CD4-positive, alpha-beta T cell (primary cell): ENCODE measurements at regions of chr14 and their contacts with region 1.

Region 1: DNA sequence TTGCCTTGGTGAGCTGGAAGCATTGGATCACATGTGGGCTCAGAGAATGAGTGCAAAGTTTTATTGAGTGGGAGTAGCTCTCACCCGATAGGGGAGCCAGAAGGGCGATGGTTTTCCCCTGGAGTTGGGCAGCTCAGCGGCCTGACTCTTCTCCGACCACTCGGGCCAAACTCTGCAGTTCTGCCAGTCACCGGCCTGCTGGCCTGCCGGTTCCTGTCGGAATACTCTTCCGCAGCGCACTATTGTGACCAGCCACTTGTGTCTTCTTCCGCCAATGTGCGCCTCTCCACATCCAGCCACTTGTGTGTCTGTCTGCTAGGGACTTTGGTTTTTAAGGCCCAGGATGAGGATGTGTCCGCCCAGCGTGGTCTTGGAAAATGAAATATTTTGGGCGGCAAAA is 43.5 kb upstream of the PRKD1 start:
- DNase-seq: no peak
- ATAC-seq: no peak
- H3K4me3 ChIP-seq: no peak overlapping the region
- H3K4me3 Mint-ChIP-seq: no peak overlapping the region
- H3K27ac ChIP-seq: no peak overlapping the region
- H3K27ac Mint-ChIP-seq: no peak overlapping the region
- H3K4me1 ChIP-seq: no peaks in the 10 kb centered on the region
- H3K4me1 Mint-ChIP-seq: no peaks in the 10 kb centered on the region
- H3K27me3 ChIP-seq: no peaks in the 10 kb centered on the region
- H3K27me3 Mint-ChIP-seq: no peaks in the 10 kb centered on the region
- CTCF ChIP-seq: no peak

Region 2: GRCh38 chr14:29926701-29927375 is 44.3 kb before region 1 on chr14:
- CTCF ChIA-PET with region 1: no interaction called
- POLR2A ChIA-PET with region 1: no interaction called
- intact Hi-C with region 1: loop called in 1 of 2 experiments (anchors 1 kb)
- DNase-seq: no peak
- ATAC-seq: no peak
- H3K4me3 ChIP-seq: no peak overlapping the region
- H3K4me3 Mint-ChIP-seq: no peak overlapping the region
- H3K27ac ChIP-seq: no peak overlapping the region
- H3K27ac Mint-ChIP-seq: no peak overlapping the region
- H3K4me1 ChIP-seq: no peaks in the 10 kb centered on the region
- H3K4me1 Mint-ChIP-seq: peaks cover 4% of the 10 kb centered on the region
- H3K27me3 ChIP-seq: peaks cover 19 to 36% of the 10 kb centered on the region in 2 experiments
- H3K27me3 Mint-ChIP-seq: peaks cover 46% of the 10 kb centered on the region
- CTCF ChIP-seq: no peak

Region 3: DNA sequence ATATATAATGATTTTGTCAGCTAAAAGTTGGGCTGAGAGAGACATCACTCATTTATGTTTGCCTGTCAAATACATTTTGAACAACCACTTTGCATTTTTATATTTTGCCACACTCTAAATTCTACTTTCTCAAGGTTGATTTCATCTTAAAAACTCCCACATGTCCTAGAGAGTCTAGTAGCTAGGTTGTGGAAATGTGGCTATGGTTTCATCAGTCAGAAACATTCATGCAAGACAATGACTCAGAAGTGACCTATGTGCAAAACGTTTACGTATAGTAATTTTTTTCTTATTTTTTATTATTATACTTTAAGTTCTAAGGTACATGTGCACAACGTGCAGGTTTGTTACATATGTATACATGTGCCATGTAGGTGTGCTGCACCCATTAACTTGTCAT is 16.0 kb before region 1 on chr14:
- CTCF ChIA-PET with region 1: no interaction called
- POLR2A ChIA-PET with region 1: no interaction called
- intact Hi-C with region 1: no loop called
- DNase-seq: no peak
- ATAC-seq: no peak
- H3K4me3 ChIP-seq: no peak overlapping the region
- H3K4me3 Mint-ChIP-seq: no peak overlapping the region
- H3K27ac ChIP-seq: no peak overlapping the region
- H3K27ac Mint-ChIP-seq: no peak overlapping the region
- H3K4me1 ChIP-seq: no peaks in the 10 kb centered on the region
- H3K4me1 Mint-ChIP-seq: no peaks in the 10 kb centered on the region
- H3K27me3 ChIP-seq: no peaks in the 10 kb centered on the region
- H3K27me3 Mint-ChIP-seq: no peaks in the 10 kb centered on the region
- CTCF ChIP-seq: no peak